Ascending aorta (tissue), 2 donors: ENCODE measurements at regions of chr2 and their contacts with region 1.

Region 1: DNA sequence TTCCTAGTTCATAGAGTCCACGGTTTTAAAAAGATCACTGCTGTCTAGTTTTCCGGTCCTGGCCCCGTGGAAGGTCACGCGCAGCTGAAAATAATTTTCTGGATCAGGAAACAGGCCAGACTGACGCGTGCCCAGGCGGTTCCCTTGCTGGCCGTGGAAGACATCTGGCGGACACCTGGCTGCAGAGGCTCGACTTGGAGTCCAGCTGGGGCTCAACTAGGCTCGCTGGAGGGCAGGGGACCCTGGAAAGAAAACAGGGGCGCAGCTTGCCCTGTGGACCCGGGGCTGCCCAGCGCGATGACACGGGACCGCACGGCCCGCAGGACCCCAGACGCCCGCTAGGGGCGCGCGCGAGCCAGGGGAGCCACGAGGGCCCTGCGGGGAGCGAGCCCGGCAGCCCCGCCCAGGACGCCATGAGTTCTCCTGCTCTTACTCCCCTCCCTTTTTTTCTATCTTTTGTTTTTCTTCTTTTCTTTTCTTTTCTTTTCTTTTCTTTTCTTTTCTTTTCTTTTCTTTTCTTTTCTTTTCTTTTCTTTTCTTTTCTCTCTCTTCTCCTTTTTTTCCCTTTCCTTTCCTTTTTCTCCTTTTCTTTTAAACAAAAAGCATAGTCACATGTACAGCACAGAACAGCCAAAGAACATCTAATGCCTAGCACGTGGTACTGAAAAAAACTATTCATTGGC is 43.2 kb upstream of the UBE2F start:
- DNase-seq: peak in 1 of 2 donors; percentile 89
- H3K4me3 ChIP-seq: peak overlapping the region; percentile 16 to 48
- H3K27ac ChIP-seq: peak overlapping the region; percentile 91 to 94
- H3K4me1 ChIP-seq: peaks cover 5 to 26% of the 10 kb centered on the region in 2 donors
- H3K27me3 ChIP-seq: no peaks in the 10 kb centered on the region
- CTCF ChIP-seq: peak; percentile 99 to 100 (median 99)

Region 2: DNA sequence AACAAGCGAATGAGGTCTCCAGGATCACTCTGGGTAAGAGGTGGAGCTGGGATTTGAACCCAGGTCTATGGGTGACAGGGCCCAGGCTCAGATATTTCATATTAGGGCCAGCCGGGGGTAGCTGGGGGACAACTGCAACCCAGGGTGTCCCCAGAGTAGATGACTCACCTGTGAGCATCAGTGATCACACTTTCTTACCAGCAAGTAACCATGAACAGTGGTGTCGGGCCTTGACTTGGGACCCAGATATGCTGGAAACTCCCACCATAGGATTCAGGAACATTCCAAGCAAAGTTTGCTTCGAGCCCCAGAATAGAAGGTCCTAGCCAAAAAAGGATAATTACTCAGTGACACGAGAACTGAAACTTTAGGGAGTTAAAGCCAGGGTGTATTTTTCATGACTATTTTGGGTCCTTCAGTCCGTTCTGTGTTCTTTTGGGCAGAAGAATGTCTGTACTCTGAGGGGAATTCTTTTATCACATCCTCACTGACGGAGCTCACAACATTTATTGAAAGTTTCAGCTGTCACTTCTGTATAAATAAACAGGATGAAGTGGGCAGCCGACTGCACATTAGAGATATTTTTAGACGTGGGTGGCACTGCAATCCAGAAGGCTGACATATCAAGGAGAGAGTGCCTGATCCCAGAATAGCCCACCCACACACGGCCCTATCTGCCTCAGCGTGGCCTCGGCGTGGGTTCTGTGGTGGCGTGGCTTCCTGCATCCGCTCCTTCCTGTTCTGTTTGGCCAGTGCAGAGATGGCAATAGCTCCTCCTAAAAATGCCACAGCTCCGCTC is 18.6 kb before region 1 on chr2:
- intact Hi-C with region 1: loop called (anchors 2 kb)
- DNase-seq: peak; percentile 64 to 98
- H3K4me3 ChIP-seq: no peak overlapping the region
- H3K27ac ChIP-seq: peak overlapping the region; percentile 96 to 99
- H3K4me1 ChIP-seq: peaks cover 11 to 46% of the 10 kb centered on the region in 2 donors
- H3K27me3 ChIP-seq: no peaks in the 10 kb centered on the region
- CTCF ChIP-seq: no peak

Region 3: GRCh38 chr2:237935740-237936452 is 12.3 kb after region 1 on chr2:
- intact Hi-C with region 1: no loop called
- DNase-seq: no peak
- H3K4me3 ChIP-seq: no peak overlapping the region
- H3K27ac ChIP-seq: no peak overlapping the region
- H3K4me1 ChIP-seq: peaks cover 3 to 16% of the 10 kb centered on the region in 2 donors
- H3K27me3 ChIP-seq: no peaks in the 10 kb centered on the region
- CTCF ChIP-seq: no peak

Region 4: DNA sequence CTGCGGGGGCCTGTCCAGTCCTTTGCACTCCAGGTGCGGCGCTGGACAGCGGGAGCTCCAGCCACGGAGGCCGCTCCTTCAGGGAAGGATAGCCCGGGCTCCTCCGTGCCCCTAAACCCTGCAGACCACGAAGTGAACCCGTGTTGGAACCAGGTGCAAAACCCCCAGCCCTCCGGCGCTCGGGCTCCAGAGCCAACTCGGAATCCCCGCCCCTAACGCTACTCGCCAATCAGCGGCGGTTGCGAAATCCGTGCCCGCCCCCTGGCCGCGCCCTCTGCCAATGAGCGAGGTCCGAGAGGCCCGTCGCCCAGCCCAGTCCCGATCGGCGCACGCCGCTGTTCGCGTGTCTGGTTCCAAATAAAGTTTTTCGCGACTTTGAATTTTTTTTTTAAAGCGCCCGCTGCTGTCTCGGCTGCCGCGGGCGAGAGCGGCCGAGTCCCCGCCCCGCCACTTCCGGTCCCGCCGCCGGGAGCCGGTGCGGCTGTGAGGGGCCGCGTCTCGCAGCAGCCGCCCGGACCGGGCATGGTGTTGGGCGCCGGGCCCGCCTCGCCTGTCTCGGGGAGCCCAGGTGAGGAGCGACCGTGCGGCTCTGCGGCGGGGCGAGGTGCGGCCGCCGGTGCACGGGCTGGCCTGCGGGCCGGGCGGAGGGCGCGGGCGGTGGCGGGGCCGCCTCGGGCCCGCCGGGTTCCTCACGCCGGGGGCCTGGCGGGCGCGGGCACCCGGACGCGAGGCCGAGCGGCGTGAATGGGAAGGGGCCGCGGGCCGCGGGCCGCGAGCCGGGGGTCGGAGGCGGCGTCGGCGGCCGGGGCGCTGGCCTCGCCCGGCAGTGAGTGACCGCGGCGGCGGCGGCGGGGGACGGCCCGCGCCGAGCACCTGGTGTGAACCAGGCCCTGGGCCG is 43.2 kb after region 1 on chr2 and contains the start of gene UBE2F:
- intact Hi-C with region 1: loop called (anchors 2 kb)
- DNase-seq: peak; percentile 84 to 98
- H3K4me3 ChIP-seq: peak within 1 kb of the TSS; percentile 82 to 87
- H3K27ac ChIP-seq: peak within 1 kb of the TSS; percentile 61 to 69
- H3K4me1 ChIP-seq: peaks cover 20 to 31% of the 10 kb centered on the region in 2 donors
- H3K27me3 ChIP-seq: no peaks in the 10 kb centered on the region
- CTCF ChIP-seq: no peak
- total RNA-seq, gene UBE2F: 50.7 TPM

Region 5: DNA sequence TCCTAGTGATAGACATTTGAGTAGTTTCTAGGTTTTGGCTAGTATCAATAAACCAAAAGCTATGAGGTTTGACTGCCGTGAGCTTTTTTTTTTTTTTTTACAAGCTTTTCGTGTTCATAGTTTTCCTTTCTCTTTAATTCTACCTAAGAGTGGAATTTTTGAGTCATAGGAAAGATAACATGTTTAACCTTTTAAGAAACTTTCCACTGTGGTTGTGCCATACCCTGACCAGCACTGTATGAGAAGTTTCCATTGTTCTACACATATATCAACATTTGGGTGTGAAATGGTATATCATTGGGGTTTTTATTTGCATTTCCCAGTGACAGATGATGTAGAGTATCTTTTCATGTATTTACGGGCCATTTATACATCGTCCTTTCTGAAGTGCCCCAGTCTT is 74.9 kb after region 1 on chr2:
- intact Hi-C with region 1: loop called (anchors 5 kb)
- DNase-seq: no peak
- H3K4me3 ChIP-seq: peak overlapping the region in 1 of 2 donors; percentile 19
- H3K27ac ChIP-seq: peak overlapping the region; percentile 6 to 26
- H3K4me1 ChIP-seq: peaks cover 0 to 22% of the 10 kb centered on the region in 2 donors
- H3K27me3 ChIP-seq: no peaks in the 10 kb centered on the region
- CTCF ChIP-seq: no peak

Region 6: DNA sequence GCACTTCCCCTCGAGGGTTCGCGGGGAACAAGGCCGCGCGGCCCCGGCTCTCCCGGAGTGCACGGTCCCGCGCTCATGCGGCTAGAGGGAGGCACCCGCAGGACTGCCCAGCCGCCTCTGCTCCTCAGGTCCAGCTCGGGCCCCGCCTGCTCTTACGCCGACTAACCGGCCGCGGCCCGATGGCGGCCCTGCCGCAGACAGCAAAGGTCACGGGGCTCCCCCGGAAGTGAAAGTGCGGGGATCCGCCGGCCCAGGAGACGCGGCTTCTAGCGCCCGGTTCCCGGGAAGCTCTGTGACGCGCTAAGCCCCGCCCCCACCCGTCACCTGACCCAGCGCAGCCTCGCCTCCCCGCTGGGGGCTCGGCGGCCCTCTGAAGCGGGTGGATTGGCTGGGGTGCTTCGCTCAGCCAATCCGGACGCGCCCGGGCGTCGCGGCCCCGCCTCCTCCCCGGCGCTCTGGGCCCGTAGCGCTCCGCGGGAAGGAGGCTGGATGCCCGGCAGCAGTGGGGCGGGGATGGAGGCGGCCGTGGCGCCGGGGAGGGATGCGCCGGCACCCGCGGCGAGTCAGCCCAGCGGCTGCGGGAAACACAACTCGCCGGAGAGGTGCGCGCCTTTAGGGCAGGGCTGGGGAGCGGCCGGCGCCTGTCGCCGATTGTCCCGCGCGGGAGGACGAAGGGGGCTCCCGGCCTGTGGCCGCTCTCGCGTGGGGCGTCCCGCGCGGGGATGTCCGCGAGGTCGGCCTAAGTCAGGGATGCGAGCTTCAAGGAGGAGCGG is 137.1 kb after region 1 on chr2 and contains the start of gene SCLY:
- intact Hi-C with region 1: loop called (anchors 2 kb)
- DNase-seq: peak; percentile 89 to 98
- H3K4me3 ChIP-seq: peak within 1 kb of the TSS; percentile 85 to 92
- H3K27ac ChIP-seq: peak within 1 kb of the TSS; percentile 87 to 89
- H3K4me1 ChIP-seq: peaks cover 5 to 17% of the 10 kb centered on the region in 2 donors
- H3K27me3 ChIP-seq: no peaks in the 10 kb centered on the region
- CTCF ChIP-seq: no peak
- total RNA-seq, gene SCLY: 87.5 TPM

Region 7: DNA sequence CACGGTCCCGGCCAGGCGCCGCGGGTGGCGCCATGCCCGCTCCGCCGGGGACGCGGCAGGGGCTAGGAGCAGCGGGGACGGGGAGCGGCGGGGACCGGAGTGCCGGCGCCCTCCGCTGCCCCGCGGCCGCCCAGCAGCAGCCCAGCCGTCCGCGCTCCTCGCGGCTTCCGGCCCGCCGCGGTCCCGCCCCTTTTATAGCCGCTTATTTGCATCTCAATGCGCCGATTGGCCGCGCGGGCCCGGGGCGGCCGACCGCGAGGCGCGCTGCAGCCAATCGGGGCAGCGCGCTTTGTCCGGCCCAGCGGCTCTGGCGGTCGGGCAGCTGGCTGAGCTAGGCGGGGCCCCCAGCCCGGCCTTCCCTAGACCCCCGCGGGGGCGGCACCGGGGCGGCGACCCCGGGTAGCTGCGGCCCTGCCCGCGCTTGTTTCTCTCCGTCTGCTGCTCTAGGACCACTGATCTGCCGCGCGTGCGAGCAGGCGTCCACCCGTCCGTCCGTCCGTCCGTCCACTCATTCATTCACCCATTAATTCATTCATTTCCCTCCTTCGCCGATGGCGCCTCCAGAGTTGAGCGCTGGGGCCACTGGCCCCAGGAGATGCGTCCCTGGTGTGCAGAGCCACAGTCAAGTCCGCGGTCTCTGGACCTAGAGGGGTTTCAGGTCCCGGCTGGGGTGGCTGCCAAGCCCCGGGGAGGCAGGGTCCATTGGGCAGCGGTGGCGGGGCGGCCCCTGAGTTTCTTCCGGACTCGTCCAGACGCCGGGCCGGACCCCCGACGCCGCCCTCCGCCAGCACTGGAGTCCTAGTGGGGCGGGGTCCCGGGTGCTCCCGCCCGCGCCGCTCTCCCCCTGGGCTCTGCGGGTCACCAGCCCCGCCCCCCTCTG is 316.5 kb after region 1 on chr2 and contains the start of gene HES6:
- intact Hi-C with region 1: loop called (anchors 5 kb)
- DNase-seq: peak; percentile 62 to 95
- H3K4me3 ChIP-seq: peak within 1 kb of the TSS; percentile 67 to 92
- H3K27ac ChIP-seq: peak within 1 kb of the TSS; percentile 64 to 79
- H3K4me1 ChIP-seq: peaks cover 0 to 23% of the 10 kb centered on the region in 2 donors
- H3K27me3 ChIP-seq: peaks cover 3% of the 10 kb centered on the region
- CTCF ChIP-seq: no peak
- total RNA-seq, gene HES6: 117 TPM

Region 8: GRCh38 chr2:238263204-238264071 is 339.8 kb after region 1 on chr2:
- intact Hi-C with region 1: loop called (anchors 5 kb)
- DNase-seq: peak; percentile 63 to 97
- H3K4me3 ChIP-seq: no peak overlapping the region
- H3K27ac ChIP-seq: peak overlapping the region; percentile 37 to 51
- H3K4me1 ChIP-seq: peaks cover 0 to 6% of the 10 kb centered on the region in 2 donors
- H3K27me3 ChIP-seq: no peaks in the 10 kb centered on the region
- CTCF ChIP-seq: peak; percentile 75 to 90 (median 77)